Heart right ventricle (tissue), 16 donors: ENCODE measurements at regions of chr7 and their contacts with region 1.

Region 1: GRCh38 chr7:29035044-29035740 is 77.1 kb upstream of the TRIL start:
- DNase-seq: no peak
- ATAC-seq: peak in 7 of 8 donors; percentile 25 to 91 (median 67)
- H3K4me3 ChIP-seq: no peak overlapping the region
- H3K27ac ChIP-seq: peak overlapping the region in 1 of 10 donors; percentile 12
- H3K4me1 ChIP-seq: peaks cover 0 to 42% (median 24%) of the 10 kb centered on the region in 9 donors
- H3K27me3 ChIP-seq: no peaks in the 10 kb centered on the region
- CTCF ChIP-seq: no peak

Region 2: DNA sequence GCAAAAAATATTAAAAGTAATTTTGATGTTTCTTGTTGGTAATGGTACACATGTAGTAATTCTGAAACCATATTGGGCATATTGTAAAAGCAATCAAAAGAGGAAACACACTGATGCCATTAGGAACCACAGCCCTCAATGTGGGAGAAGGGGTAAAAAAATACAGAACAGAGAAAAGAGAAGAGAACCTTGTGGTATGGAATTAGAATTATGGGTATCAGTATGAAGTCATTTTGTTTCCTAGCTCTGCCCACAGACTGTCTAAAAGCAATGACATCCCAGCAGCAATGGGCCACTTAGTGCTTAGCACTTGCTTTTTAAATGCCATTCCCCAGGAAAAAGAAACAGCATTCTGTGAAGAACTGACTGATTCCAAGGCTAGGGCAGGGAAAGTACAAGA is 49.6 kb after region 1 on chr7:
- intact Hi-C with region 1: loop called in 2 of 10 experiments (anchors 5 to 10 kb)
- DNase-seq: no peak
- ATAC-seq: peak in 3 of 8 donors; percentile 46 to 62 (median 49)
- H3K4me3 ChIP-seq: no peak overlapping the region
- H3K27ac ChIP-seq: no peak overlapping the region
- H3K4me1 ChIP-seq: peaks cover 0 to 39% (median 25%) of the 10 kb centered on the region in 9 donors
- H3K27me3 ChIP-seq: no peaks in the 10 kb centered on the region
- CTCF ChIP-seq: no peak

Region 3: GRCh38 chr7:29091715-29092114 is 56.5 kb after region 1 on chr7:
- intact Hi-C with region 1: loop called in 2 of 10 experiments (anchors 5 to 10 kb)
- DNase-seq: no peak
- ATAC-seq: peak in 4 of 8 donors; percentile 38 to 72 (median 54)
- H3K4me3 ChIP-seq: peak overlapping the region in 9 of 10 donors; percentile 10 to 50 (median 38)
- H3K27ac ChIP-seq: peak overlapping the region in 9 of 10 donors; percentile 26 to 85 (median 67)
- H3K4me1 ChIP-seq: peaks cover 0 to 55% (median 38%) of the 10 kb centered on the region in 9 donors
- H3K27me3 ChIP-seq: no peaks in the 10 kb centered on the region
- CTCF ChIP-seq: peak in 1 of 9 donors; percentile 10

Region 4: DNA sequence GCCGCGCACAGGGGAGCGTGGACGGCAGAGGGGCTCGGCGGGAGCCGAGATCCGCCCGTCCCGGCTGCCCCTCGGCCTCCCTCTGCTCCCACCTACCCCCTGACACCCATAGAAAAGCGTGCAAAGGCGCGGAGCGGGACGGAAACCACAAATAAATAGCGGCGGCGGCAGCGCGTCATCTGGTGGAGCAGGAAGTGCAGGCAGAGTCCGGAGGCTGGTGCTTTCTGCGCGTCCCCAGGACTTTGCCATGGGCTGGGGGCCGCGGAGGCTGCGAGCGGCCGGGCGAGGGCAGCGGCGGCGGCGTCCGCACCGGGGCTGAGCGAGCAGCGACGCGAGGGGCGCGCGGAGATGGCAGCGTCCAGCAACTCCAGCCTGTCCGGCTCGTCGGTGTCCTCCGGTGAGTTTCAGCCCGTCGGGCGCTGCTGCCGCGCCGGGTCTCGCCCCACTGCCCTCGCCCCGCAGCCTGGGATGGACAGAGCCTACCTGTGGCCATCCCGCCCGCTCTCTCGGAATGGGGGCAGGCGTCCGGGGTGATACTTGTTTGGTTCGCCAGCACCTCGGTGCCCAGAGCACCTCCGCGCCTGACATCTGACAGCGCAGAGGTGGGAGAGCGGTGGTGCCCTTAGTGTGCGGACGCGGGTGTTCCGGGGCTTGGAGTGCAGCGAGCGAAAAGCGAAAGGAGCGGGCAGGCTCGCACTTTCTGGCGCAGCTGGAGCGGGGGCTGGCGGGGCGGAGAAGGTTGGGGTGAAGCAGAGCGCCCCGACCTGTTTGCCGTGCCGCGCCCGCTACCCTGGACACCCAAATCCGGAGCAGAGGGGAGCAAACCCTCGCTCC is 159.6 kb after region 1 on chr7 and contains the start of gene CHN2:
- intact Hi-C with region 1: no loop called
- DNase-seq: peak; percentile 58 to 62
- ATAC-seq: peak; percentile 72 to 84 (median 77)
- H3K4me3 ChIP-seq: peak within 1 kb of the TSS; percentile 52 to 82 (median 76)
- H3K27ac ChIP-seq: peak within 1 kb of the TSS in 7 of 10 donors; percentile 5 to 68 (median 52)
- H3K4me1 ChIP-seq: peaks cover 0 to 37% (median 16%) of the 10 kb centered on the region in 9 donors
- H3K27me3 ChIP-seq: peaks cover 0 to 45% (median 7%) of the 10 kb centered on the region in 7 donors
- CTCF ChIP-seq: peak in 4 of 9 donors; percentile 21 to 38 (median 26)
- total RNA-seq, gene CHN2: 5.9 to 54.9 (median 27.6) TPM